ENCODE measurements at regions of chr12 and their contacts with region 1.

Region 1: DNA sequence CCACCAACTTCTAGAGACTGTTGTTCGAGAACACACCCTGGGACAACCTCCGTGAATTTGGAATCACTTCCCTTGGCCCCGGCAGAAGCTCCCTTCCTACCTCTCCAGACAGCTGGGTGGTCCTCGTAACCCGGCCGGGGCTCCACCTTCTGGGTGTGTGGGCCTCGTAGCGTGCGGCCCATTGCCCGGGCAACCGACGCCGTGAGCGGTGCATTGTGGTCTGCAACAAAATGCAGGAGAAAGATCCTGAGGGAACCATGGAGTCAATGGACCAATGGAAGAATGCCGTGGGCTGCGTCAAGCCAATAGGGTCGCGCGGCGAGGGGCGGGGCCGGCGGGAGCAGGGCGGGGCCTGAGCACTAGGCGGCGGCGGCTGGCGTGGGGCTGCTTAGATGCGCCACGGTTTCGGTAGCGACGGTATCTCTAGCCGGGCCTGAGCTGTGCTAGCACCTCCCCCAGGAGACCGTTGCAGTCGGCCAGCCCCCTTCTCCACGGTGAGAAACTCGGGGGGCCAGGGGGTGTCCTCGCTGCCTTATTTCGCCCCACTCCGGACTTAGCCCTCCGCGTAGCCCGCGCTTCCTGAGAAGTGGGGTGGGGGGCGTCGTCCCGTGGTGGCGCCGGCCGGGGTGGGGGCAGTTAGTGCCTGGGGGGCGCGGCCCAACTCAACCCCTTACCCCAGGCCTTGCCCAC is at the start of gene DYNLL1:
- DNase-seq: peak; percentile 96
- H3K4me3 ChIP-seq: peak within 1 kb of the TSS; percentile 75 to 84
- H3K27ac ChIP-seq: peak within 1 kb of the TSS; percentile 91 to 92
- H3K4me1 ChIP-seq: no peaks in the 10 kb centered on the region
- H3K27me3 ChIP-seq: no peaks in the 10 kb centered on the region
- CTCF ChIP-seq: peak in 3 of 4 experiments; percentile 5 to 55 (median 30)
- POLR2A ChIP-seq: peak; percentile 83
- total RNA-seq, gene DYNLL1: 166 to 303 TPM

Region 2: DNA sequence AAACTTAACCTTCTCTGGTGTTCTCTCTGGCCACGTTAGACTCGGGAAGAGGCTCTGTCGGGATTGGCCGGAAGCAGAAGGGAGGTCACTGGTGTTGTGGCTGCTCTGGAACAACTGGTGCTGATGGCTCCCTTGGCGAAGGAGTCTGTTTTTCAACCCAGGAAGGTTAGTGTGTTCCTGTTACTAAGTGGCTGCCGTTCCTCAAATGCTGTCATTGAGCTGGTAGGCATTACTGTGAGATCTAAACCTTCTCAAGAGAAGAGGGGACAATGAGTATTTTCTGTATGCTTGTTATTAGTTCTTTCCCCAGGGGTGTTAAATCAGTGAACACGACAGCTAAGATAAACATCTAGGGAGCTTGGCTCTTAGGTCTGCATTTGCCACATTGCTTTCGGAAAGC is 67.0 kb after region 1 on chr12:
- intact Hi-C with region 1: loop called (anchors 10 kb)
- DNase-seq: no peak
- H3K4me3 ChIP-seq: no peak overlapping the region
- H3K27ac ChIP-seq: no peak overlapping the region
- H3K4me1 ChIP-seq: no peaks in the 10 kb centered on the region
- H3K27me3 ChIP-seq: no peaks in the 10 kb centered on the region
- CTCF ChIP-seq: no peak
- POLR2A ChIP-seq: no peak